Mammary epithelial cell (primary cell): ENCODE measurements at regions of chr12 and their contacts with region 1.

Region 1: GRCh38 chr12:78571953-78572352 is 292.6 kb upstream of the SYT1 start:
- DNase-seq: no peak
- H3K4me3 ChIP-seq: no peak overlapping the region
- H3K27ac ChIP-seq: no peak overlapping the region
- H3K4me1 ChIP-seq: no peaks in the 10 kb centered on the region
- H3K27me3 ChIP-seq: no peaks in the 10 kb centered on the region
- CTCF ChIP-seq: no peak

Region 2: DNA sequence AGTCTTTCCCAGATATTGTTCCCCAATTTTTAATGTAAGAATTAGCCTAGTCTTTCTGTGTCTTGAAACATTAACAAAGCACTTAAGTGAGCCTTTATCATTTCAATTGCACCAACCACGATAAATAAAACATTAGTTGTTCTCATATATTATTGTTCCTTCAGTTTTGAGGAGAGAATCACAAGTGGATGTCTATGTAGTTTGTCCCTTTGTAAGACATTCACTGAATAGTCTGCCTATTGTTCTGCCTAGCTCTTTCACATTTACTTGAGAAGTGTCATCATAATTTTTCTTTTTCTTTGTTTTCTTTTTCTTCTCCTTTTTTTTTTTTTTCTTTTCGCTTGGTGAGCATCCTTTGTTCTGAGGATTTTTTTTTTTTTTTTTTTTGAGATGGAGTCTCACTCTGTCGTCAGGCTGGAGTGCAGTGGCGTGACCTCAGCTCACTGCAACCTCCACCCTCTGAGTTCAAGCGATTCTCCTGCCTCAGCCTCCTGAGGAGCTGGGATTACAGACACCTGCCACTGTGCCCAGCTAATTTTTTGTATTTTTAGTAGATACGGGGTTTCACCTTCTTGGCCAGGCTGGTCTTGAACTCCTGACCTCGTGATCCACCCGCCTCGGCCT is 422.3 kb after region 1 on chr12:
- CTCF ChIA-PET with region 1: no interaction called
- dilution Hi-C with region 1: no loop called
- in situ Hi-C with region 1: no loop called
- intact Hi-C with region 1: loop called (anchors 5 kb)
- DNase-seq: no peak
- H3K4me3 ChIP-seq: no peak overlapping the region
- H3K27ac ChIP-seq: no peak overlapping the region
- H3K4me1 ChIP-seq: no peaks in the 10 kb centered on the region
- H3K27me3 ChIP-seq: no peaks in the 10 kb centered on the region
- CTCF ChIP-seq: no peak

Region 3: GRCh38 chr12:79690638-79691493 is 1118.9 kb after region 1 on chr12 and contains the start of gene PAWR:
- CTCF ChIA-PET with region 1: no interaction called
- dilution Hi-C with region 1: no loop called
- in situ Hi-C with region 1: no loop called
- intact Hi-C with region 1: no loop called
- DNase-seq: peak; percentile 94
- H3K4me3 ChIP-seq: peak within 1 kb of the TSS; percentile 73 to 81 (median 78)
- H3K27ac ChIP-seq: peak within 1 kb of the TSS; percentile 99
- H3K4me1 ChIP-seq: peaks cover 20% of the 10 kb centered on the region
- H3K27me3 ChIP-seq: no peaks in the 10 kb centered on the region
- CTCF ChIP-seq: peak in 1 of 2 donors; percentile 41
- total RNA-seq, gene PAWR: 108 to 179 TPM